Mammary epithelial cell (primary cell): ENCODE measurements at regions of chr3 and their contacts with region 1.

Region 1: DNA sequence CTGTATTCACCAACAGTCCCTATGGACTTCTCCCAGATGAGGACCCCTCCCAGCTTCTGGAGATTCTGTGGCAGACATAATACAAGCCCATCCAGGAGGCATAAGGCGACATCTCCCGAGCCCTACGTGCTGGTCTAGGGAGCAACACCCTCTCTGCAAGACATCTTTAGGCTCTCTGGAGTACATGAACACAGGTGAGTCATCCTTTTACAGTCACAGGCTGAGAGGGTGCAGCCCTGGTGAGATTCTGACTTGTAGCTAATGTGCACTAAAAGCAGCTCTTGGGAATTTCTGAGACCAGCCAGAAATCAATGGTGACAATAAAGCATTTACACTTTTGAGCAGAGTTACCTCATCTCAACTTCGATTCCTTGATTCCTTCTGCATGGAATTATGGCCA is 131.1 kb downstream of the XXYLT1 start:
- DNase-seq: peak; percentile 71
- H3K4me3 ChIP-seq: no peak overlapping the region
- H3K27ac ChIP-seq: no peak overlapping the region
- H3K4me1 ChIP-seq: peaks cover 11% of the 10 kb centered on the region
- H3K27me3 ChIP-seq: no peaks in the 10 kb centered on the region
- CTCF ChIP-seq: no peak

Region 2: DNA sequence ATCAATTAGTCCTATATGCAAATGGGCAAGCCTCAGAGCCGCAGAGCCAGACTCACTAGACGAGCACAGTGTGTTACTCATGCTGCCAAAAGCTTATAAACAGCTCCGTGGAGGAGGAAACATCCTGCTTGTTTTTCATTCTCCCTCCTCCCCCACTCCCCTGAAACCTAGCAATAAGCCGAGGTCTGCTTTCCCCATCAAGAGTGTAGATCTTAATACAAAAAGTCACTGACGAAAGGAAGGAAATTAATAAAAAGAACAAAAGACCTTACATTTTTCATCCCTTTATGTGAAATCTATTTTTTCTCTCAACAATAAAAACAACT is 42.6 kb after region 1 on chr3:
- CTCF ChIA-PET with region 1: no interaction called
- dilution Hi-C with region 1: loop called (anchors 5 kb)
- in situ Hi-C with region 1: no loop called
- intact Hi-C with region 1: no loop called
- DNase-seq: no peak
- H3K4me3 ChIP-seq: no peak overlapping the region
- H3K27ac ChIP-seq: no peak overlapping the region
- H3K4me1 ChIP-seq: peaks cover 20% of the 10 kb centered on the region
- H3K27me3 ChIP-seq: no peaks in the 10 kb centered on the region
- CTCF ChIP-seq: no peak